Activated T-helper 1 cell treated with anti-CD3 and anti-CD28 coated beads, Interleukin-12 subunit alpha, Interleukin-12 subunit beta, Interleukin-2, Interleukin-4 antibody, amounts not matched to agents 30 ng/mL and 10 ng/mL and 1 ng/mL, durations not matched to agents 14 hours and 24 hours and 36 hours (primary cell): ENCODE measurements at regions of chr3 and their contacts with region 1.

Region 1: DNA sequence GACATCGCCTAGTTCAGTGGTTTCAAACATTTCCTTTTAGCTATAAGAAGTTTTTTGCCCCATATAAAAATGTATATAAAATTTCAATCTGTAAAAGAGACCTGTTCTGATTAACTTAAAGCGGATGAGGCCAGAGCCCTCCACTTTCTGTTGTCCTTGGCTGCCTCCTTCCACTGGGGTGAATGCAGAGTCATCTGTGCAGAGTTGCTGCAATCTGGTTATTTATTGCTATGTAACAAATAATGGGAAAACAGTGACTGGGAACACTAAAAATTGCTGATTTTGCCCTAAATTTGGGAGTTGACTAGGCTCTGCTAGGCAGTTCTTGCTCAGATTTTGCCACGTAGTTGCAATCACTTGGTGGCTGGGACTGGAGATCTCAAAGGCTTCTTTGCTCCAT is 637.8 kb downstream of the GRM7 start:
- DNase-seq: no peak
- H3K4me3 Mint-ChIP-seq: no peak overlapping the region
- H3K27ac Mint-ChIP-seq: no peak overlapping the region
- H3K4me1 Mint-ChIP-seq: no peaks in the 10 kb centered on the region
- H3K27me3 Mint-ChIP-seq: no peaks in the 10 kb centered on the region

Region 2: GRCh38 chr3:7447197-7447769 is 51.4 kb before region 1 on chr3:
- intact Hi-C with region 1: loop called (anchors 1 kb)
- DNase-seq: no peak
- H3K4me3 Mint-ChIP-seq: no peak overlapping the region
- H3K27ac Mint-ChIP-seq: no peak overlapping the region
- H3K4me1 Mint-ChIP-seq: no peaks in the 10 kb centered on the region
- H3K27me3 Mint-ChIP-seq: no peaks in the 10 kb centered on the region